CD8-positive, alpha-beta T cell (primary cell): ENCODE measurements at regions of chr21 and their contacts with region 1.

Region 1: GRCh38 chr21:31580866-31581276 is 78.6 kb upstream of the SOD1 start:
- DNase-seq: peak; percentile 43 to 85 (median 73)
- ATAC-seq: peak; percentile 92
- H3K4me3 ChIP-seq: no peak overlapping the region
- H3K4me3 Mint-ChIP-seq: no peak overlapping the region
- H3K27ac ChIP-seq: no peak overlapping the region
- H3K27ac Mint-ChIP-seq: no peak overlapping the region
- H3K4me1 ChIP-seq: no peaks in the 10 kb centered on the region
- H3K4me1 Mint-ChIP-seq: no peaks in the 10 kb centered on the region
- H3K27me3 ChIP-seq: peaks cover 0 to 2% of the 10 kb centered on the region in 2 experiments
- H3K27me3 Mint-ChIP-seq: peaks cover 2% of the 10 kb centered on the region
- CTCF ChIP-seq: peak; percentile 79

Region 2: DNA sequence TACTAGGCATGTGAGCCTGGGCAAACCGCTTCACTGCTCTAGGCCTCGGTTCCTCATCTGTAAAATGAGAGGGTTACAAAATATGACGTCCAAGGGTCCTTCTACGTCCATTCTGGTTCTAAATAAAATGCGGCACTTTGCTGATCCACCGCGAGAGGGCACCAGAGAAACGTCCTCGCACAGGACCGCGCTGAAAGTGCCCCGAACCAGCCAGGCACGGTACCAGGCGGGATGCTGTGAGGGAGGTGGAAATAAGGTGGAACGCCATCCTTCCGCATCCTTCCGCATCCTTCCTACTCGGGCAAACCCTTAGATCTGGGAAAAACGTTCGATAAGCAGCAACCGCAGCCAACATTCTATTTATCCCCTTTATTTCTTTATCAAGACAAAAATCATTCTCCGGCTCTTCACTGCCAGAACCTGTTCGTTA is 482.3 kb before region 1 on chr21:
- CTCF ChIA-PET with region 1: interaction called, 71 read pairs
- POLR2A ChIA-PET with region 1: interaction called, 5 read pairs
- intact Hi-C with region 1: loop called (anchors 1 kb)
- DNase-seq: peak; percentile 54 to 85 (median 73)
- ATAC-seq: peak; percentile 78
- H3K4me3 ChIP-seq: no peak overlapping the region
- H3K4me3 Mint-ChIP-seq: no peak overlapping the region
- H3K27ac ChIP-seq: no peak overlapping the region
- H3K27ac Mint-ChIP-seq: no peak overlapping the region
- H3K4me1 ChIP-seq: no peaks in the 10 kb centered on the region
- H3K4me1 Mint-ChIP-seq: peaks cover 22% of the 10 kb centered on the region
- H3K27me3 ChIP-seq: no peaks in the 10 kb centered on the region
- H3K27me3 Mint-ChIP-seq: no peaks in the 10 kb centered on the region
- CTCF ChIP-seq: peak; percentile 90

Region 3: DNA sequence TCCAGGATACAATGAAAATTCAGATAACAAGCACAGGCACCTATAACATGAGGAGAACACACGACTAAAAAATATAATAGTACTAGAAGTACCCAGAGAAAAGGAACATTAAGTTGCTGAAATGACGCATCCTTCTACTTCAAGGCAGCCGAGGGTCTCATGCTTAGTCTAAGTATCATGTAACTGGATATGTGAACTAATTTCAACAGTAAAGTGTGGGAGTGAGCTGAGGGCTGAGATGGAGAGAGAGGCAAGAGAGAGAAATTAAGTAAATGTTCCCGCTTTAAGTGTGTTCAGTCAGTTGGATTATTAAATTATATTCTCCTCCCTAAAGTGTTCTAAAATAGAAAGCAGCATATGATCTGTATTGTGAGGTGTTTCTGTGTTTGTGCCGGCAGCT is 390.4 kb before region 1 on chr21:
- CTCF ChIA-PET with region 1: interaction called, 151 read pairs
- POLR2A ChIA-PET with region 1: interaction called, 5 read pairs
- intact Hi-C with region 1: no loop called
- DNase-seq: no peak
- ATAC-seq: no peak
- H3K4me3 ChIP-seq: no peak overlapping the region
- H3K4me3 Mint-ChIP-seq: no peak overlapping the region
- H3K27ac ChIP-seq: no peak overlapping the region
- H3K27ac Mint-ChIP-seq: no peak overlapping the region
- H3K4me1 ChIP-seq: peaks cover 26% of the 10 kb centered on the region
- H3K4me1 Mint-ChIP-seq: peaks cover 33% of the 10 kb centered on the region
- H3K27me3 ChIP-seq: no peaks in the 10 kb centered on the region
- H3K27me3 Mint-ChIP-seq: no peaks in the 10 kb centered on the region
- CTCF ChIP-seq: no peak

Region 4: GRCh38 chr21:31205412-31205811 is 375.5 kb before region 1 on chr21:
- CTCF ChIA-PET with region 1: interaction called, 151 read pairs
- POLR2A ChIA-PET with region 1: no interaction called
- intact Hi-C with region 1: loop called in 1 of 2 experiments (anchors 5 kb)
- DNase-seq: no peak
- ATAC-seq: no peak
- H3K4me3 ChIP-seq: no peak overlapping the region
- H3K4me3 Mint-ChIP-seq: no peak overlapping the region
- H3K27ac ChIP-seq: no peak overlapping the region
- H3K27ac Mint-ChIP-seq: no peak overlapping the region
- H3K4me1 ChIP-seq: no peaks in the 10 kb centered on the region
- H3K4me1 Mint-ChIP-seq: no peaks in the 10 kb centered on the region
- H3K27me3 ChIP-seq: no peaks in the 10 kb centered on the region
- H3K27me3 Mint-ChIP-seq: no peaks in the 10 kb centered on the region
- CTCF ChIP-seq: no peak

Region 5: GRCh38 chr21:31220573-31220972 is 360.3 kb before region 1 on chr21:
- CTCF ChIA-PET with region 1: interaction called, 11 read pairs
- POLR2A ChIA-PET with region 1: interaction called, 3 read pairs
- intact Hi-C with region 1: no loop called
- DNase-seq: no peak
- ATAC-seq: no peak
- H3K4me3 ChIP-seq: no peak overlapping the region
- H3K4me3 Mint-ChIP-seq: no peak overlapping the region
- H3K27ac ChIP-seq: no peak overlapping the region
- H3K27ac Mint-ChIP-seq: no peak overlapping the region
- H3K4me1 ChIP-seq: no peaks in the 10 kb centered on the region
- H3K4me1 Mint-ChIP-seq: no peaks in the 10 kb centered on the region
- H3K27me3 ChIP-seq: no peaks in the 10 kb centered on the region
- H3K27me3 Mint-ChIP-seq: no peaks in the 10 kb centered on the region
- CTCF ChIP-seq: no peak

Region 6: GRCh38 chr21:31597683-31598082 is 16.8 kb after region 1 on chr21:
- CTCF ChIA-PET with region 1: interaction called, 32 read pairs
- POLR2A ChIA-PET with region 1: no interaction called
- intact Hi-C with region 1: no loop called
- DNase-seq: no peak
- ATAC-seq: no peak
- H3K4me3 ChIP-seq: no peak overlapping the region
- H3K4me3 Mint-ChIP-seq: no peak overlapping the region
- H3K27ac ChIP-seq: no peak overlapping the region
- H3K27ac Mint-ChIP-seq: no peak overlapping the region
- H3K4me1 ChIP-seq: no peaks in the 10 kb centered on the region
- H3K4me1 Mint-ChIP-seq: no peaks in the 10 kb centered on the region
- H3K27me3 ChIP-seq: no peaks in the 10 kb centered on the region
- H3K27me3 Mint-ChIP-seq: no peaks in the 10 kb centered on the region
- CTCF ChIP-seq: no peak

Region 7: DNA sequence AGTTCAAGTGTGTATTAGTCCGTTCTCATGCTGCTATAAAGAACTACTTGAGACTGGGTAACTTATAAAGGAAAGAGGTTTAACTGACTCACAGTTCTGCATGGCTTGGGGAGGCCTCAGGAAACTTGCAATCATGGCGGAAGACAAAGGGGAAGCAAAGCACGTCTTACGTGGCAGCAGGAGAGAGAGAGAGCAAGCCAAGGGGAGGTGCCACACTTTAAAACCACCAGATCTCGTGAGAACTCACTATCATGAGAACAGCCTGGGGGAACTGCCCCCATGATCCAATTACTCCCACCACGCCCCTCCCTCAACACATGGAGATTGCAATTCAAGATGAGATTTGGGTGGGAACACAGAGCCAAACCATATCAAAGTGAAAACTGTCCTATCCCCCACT is 702.1 kb after region 1 on chr21:
- CTCF ChIA-PET with region 1: no interaction called
- POLR2A ChIA-PET with region 1: no interaction called
- intact Hi-C with region 1: no loop called
- DNase-seq: no peak
- ATAC-seq: no peak
- H3K4me3 ChIP-seq: no peak overlapping the region
- H3K4me3 Mint-ChIP-seq: no peak overlapping the region
- H3K27ac ChIP-seq: no peak overlapping the region
- H3K27ac Mint-ChIP-seq: no peak overlapping the region
- H3K4me1 ChIP-seq: peaks cover 14% of the 10 kb centered on the region
- H3K4me1 Mint-ChIP-seq: peaks cover 19% of the 10 kb centered on the region
- H3K27me3 ChIP-seq: no peaks in the 10 kb centered on the region
- H3K27me3 Mint-ChIP-seq: no peaks in the 10 kb centered on the region
- CTCF ChIP-seq: no peak

Region 8: DNA sequence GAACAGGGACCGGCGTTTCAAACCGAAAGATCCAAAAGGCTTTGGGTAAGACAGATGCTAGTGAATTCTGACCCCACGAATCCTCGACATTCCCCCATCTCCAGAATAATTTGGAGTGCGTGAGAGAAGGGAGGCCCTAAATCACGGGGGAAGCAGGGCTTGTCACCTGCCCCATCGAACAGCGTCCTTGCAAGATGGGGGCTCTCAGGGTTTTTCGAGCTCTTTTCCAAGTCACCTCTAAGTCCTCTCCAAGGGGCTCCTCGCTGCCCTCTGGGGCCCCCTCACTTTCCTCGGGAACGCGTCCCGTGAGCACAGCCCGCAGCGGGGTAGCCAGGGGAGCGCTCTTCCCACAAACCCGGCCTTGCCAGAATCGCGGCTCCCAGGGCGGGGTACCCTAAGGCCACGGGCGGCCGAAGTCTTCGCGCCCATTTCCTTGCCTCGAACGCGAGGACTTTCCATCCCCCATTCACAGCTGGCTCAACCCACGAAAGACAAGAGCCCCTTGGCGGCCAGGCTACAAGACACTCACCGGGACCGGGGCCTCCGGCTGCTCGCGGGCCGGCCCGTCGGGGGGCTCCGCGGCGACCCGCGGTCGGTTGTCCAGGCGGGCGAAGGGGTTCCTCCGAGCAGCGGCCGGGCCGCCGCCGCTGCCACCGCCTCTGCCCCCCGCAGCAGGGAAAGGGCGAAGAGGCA is 2007.1 kb after region 1 on chr21:
- CTCF ChIA-PET with region 1: no interaction called
- POLR2A ChIA-PET with region 1: no interaction called
- intact Hi-C with region 1: no loop called
- DNase-seq: peak in 1 of 9 experiments; percentile 6
- ATAC-seq: peak; percentile 1
- H3K4me3 ChIP-seq: peak overlapping the region; percentile 82 to 91
- H3K4me3 Mint-ChIP-seq: peak overlapping the region; percentile 84
- H3K27ac ChIP-seq: peak overlapping the region; percentile 12 to 61
- H3K27ac Mint-ChIP-seq: peak overlapping the region; percentile 32
- H3K4me1 ChIP-seq: peaks cover 14% of the 10 kb centered on the region
- H3K4me1 Mint-ChIP-seq: peaks cover 16% of the 10 kb centered on the region
- H3K27me3 ChIP-seq: no peaks in the 10 kb centered on the region
- H3K27me3 Mint-ChIP-seq: no peaks in the 10 kb centered on the region
- CTCF ChIP-seq: no peak